H1 (cell line): ENCODE measurements at regions of chr21 and their contacts with region 1.

Region 1: GRCh38 chr21:42796327-42797062 is 82.8 kb downstream of the WDR4 start:
- DNase-seq: no peak
- H3K4me3 ChIP-seq: no peak overlapping the region
- H3K27ac ChIP-seq: no peak overlapping the region
- H3K4me1 ChIP-seq: peaks cover 0 to 9% (median 6%) of the 10 kb centered on the region in 4 experiments; a peak in 4 of 7 replicates
- H3K27me3 ChIP-seq: no peaks in the 10 kb centered on the region; a peak in 1 of 7 replicates
- CTCF ChIP-seq: no peak
- EP300 ChIP-seq: no peak
- POLR2A ChIP-seq: no peak
- RAD21 ChIP-seq: no peak

Region 2: DNA sequence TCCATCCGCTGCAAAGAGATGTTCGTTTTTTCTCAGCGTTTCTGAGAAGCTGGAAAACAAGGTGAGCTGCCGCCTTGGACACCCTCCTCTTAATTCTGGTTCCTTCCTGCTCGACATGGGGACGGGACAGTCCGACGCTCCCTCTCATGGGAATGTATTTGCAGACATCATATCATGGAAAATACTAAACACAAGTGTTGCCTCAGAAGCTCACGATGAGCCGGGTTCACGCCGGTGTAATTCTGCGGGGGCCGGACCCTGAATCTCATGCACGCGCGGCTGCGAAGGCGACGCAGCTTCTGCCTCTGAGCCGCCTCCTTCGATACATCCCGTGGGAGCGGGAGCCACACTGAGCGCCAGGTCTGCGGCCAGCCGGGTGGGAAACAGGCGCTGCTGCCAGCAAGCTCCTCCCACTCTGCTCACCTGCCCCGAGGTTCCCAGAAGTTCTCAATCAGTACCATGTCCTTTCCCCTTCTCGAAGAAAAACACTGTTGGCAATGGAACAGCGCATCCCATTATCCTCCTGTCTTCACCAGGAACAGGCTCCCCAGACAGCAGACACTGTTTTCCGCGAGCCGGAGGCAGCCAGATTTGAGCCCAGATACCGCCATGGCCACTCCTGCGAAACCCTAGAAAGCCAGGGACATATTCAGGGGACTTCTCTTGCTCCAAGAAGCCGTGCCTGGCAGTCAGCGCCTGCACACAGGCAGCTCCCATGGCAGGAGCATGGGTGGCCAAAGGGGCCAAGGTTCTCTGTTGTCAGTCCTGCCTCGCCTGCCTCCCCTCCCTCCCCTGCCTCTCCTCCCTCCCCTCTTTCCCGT is 15.1 kb before region 1 on chr21:
- CTCF ChIA-PET with region 1: interaction called, 10 read pairs
- POLR2A ChIA-PET with region 1: interaction called, 27 read pairs
- DNase-seq: peak in 1 of 2 experiments; percentile 74
- H3K4me3 ChIP-seq: peak overlapping the region; percentile 35 to 62 (median 50)
- H3K27ac ChIP-seq: no peak overlapping the region
- H3K4me1 ChIP-seq: peaks cover 9 to 33% (median 23%) of the 10 kb centered on the region in 4 experiments
- H3K27me3 ChIP-seq: peaks cover 0 to 24% (median 10%) of the 10 kb centered on the region in 4 experiments; a peak in 5 of 7 replicates
- CTCF ChIP-seq: peak in 1 of 3 experiments; percentile 21; a peak in 1 of 4 replicates
- EP300 ChIP-seq: no peak
- POLR2A ChIP-seq: no peak
- RAD21 ChIP-seq: no peak; a peak in 1 of 4 replicates

Region 3: DNA sequence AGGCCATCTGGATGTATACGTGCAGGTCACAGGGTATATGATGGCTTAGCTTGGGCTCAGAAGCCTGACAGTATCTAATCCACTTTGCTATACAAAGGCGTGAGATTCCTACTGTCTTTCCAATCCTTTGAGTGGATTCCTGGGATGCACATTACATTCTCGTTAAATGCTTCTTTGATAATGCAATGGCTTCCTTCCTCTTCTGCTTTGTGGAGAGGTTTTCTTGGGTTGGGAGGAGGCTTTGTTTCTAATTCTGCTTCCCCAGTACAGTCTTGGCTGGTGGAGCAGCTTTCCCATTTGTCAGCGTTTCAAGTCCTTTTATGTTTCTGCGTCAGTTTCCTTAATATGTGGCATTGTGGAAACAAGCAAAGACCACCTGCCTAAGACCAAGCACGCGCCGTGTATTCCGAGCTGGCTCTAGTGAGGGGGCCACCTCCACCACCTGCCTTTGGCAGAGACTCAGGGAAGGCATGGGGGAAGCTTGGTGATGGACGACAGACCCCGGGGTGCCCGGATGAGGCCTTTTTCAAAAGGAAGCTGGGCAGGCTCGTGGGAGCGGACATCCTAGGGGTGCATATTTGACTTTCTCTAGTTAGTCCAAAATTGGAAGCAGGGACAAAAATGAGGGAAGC is 10.1 kb after region 1 on chr21:
- CTCF ChIA-PET with region 1: interaction called, 14 read pairs
- POLR2A ChIA-PET with region 1: interaction called, 12 read pairs
- DNase-seq: peak in 1 of 2 experiments; percentile 51
- H3K4me3 ChIP-seq: no peak overlapping the region
- H3K27ac ChIP-seq: no peak overlapping the region
- H3K4me1 ChIP-seq: peaks cover 0 to 14% (median 4%) of the 10 kb centered on the region in 4 experiments; a peak in 5 of 7 replicates
- H3K27me3 ChIP-seq: no peaks in the 10 kb centered on the region
- CTCF ChIP-seq: no peak
- EP300 ChIP-seq: no peak
- POLR2A ChIP-seq: no peak
- RAD21 ChIP-seq: no peak